ENCODE measurements at regions of chr16 and their contacts with region 1.

Region 1: DNA sequence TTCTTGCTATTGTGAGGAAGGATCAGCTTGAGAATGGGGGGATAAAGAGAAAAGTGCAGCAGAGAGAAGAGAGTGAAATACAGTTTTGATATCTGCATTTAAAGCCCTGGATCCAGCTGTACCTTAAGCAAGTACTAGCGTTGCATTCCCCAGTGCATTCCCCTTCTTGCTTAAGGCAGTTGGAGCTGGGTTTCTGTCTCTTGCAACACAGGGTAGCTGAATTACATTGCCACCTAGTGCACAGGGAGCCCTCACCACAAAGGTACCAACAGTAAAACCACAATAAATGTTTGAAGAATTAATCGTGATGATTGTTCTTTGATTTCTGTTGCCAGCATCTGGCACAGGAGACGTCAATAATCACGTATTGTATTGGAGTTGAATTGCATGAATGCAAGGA is 588.7 kb downstream of the RBFOX1 start:
- DNase-seq: no peak
- ATAC-seq: peak in 1 of 2 donors; percentile 53
- H3K4me3 ChIP-seq: no peak overlapping the region
- H3K27ac ChIP-seq: no peak overlapping the region
- H3K4me1 ChIP-seq: no peaks in the 10 kb centered on the region
- H3K27me3 ChIP-seq: no peaks in the 10 kb centered on the region
- CTCF ChIP-seq: no peak
- POLR2A ChIP-seq: no peak

Region 2: DNA sequence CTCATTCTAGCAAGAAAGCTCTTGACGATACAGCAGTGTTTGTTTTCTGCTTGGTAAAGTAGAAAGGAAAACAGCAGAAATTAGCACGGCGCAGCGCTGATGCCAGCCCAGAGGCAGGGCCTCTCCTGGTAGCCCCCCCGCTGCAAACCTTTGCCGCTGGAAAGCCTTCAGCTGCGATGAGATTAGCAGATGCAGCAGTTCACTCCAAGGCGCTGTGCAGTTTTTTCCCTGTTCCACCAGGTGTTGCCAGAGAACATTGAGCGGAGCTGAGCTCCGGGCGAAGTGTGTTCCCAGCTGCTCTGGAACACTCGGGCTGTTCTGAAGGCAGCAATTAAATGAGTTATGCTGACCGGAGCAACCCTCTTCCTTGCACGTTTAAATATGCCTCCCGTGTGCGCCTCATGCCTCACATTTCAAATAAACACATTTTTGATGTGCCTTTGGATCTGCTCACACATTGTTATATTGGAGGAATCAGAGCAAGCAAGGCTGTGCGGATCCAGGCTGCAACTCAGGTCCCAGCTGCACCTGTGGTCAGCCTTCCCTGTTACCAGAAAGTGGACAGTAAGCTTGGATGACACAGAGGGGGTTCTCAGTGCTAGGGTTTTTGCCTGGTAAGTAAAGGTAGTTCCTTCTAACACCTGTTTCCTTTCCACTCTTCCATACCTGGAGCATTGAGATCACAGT is 516.0 kb before region 1 on chr16:
- in situ Hi-C with region 1: no loop called
- intact Hi-C with region 1: loop called (anchors 10 kb)
- DNase-seq: peak; percentile 70 to 86
- ATAC-seq: peak; percentile 93 to 97
- H3K4me3 ChIP-seq: peak overlapping the region in 1 of 4 donors; percentile 31
- H3K27ac ChIP-seq: peak overlapping the region; percentile 55 to 75 (median 66)
- H3K4me1 ChIP-seq: peaks cover 45 to 50% of the 10 kb centered on the region in 2 donors
- H3K27me3 ChIP-seq: no peaks in the 10 kb centered on the region
- CTCF ChIP-seq: peak; percentile 48 to 75 (median 59)
- POLR2A ChIP-seq: no peak

Region 3: GRCh38 chr16:8005096-8005860 is 83.9 kb after region 1 on chr16:
- in situ Hi-C with region 1: loop called in 1 of 4 experiments (anchors 25 kb)
- intact Hi-C with region 1: no loop called
- DNase-seq: no peak
- ATAC-seq: no peak
- H3K4me3 ChIP-seq: no peak overlapping the region
- H3K27ac ChIP-seq: no peak overlapping the region
- H3K4me1 ChIP-seq: no peaks in the 10 kb centered on the region
- H3K27me3 ChIP-seq: no peaks in the 10 kb centered on the region
- CTCF ChIP-seq: no peak
- POLR2A ChIP-seq: no peak